ENCODE measurements at regions of chr5 and their contacts with region 1.

Region 1: DNA sequence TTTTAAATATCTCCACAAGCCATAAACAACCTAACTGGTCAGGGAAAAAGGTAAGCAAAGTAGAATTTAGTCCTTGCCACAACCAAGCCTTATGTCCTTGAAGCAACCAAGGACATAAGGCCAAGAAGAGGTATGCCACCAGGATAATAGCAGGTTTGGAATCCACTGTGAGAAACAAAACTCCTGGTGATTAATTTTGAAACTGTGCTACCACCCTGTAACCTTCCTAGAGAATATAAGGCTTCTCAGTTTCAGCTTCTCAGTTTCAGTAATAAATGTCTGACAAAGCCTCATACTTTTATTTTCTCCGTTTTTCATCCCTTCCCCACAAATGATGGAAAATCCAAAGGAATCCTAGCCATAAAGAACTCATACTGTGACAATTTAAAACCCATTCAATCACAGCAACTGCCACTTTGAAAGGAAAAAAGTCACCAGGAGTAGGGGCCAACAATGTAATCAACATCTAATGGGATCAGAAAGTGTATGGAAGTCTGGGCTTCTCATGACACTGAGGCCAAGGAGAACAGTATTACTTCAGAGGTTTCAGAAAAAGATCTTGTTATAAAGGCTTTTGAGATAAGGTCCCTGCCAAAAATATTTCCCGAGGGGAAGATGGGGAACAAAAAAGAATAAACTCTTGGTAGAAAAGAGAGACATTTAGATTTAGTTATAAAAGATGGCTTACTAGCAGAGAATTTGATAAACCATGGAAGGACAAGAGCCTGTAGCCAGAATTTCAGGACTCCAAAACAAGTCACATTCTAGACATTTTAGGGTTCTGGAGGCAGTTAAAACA is 189.2 kb downstream of the TSSK1B start:
- DNase-seq: no peak
- H3K4me3 Mint-ChIP-seq: no peak overlapping the region
- H3K27ac Mint-ChIP-seq: no peak overlapping the region
- H3K4me1 Mint-ChIP-seq: peaks cover 17% of the 10 kb centered on the region
- H3K27me3 Mint-ChIP-seq: no peaks in the 10 kb centered on the region
- CTCF ChIP-seq: no peak

Region 2: GRCh38 chr5:113119246-113119924 is 126.2 kb before region 1 on chr5:
- CTCF ChIA-PET with region 1: no interaction called
- POLR2A ChIA-PET with region 1: no interaction called
- intact Hi-C with region 1: no loop called
- DNase-seq: no peak
- H3K4me3 Mint-ChIP-seq: no peak overlapping the region
- H3K27ac Mint-ChIP-seq: no peak overlapping the region
- H3K4me1 Mint-ChIP-seq: peaks cover 5% of the 10 kb centered on the region
- H3K27me3 Mint-ChIP-seq: no peaks in the 10 kb centered on the region
- CTCF ChIP-seq: no peak

Region 3: DNA sequence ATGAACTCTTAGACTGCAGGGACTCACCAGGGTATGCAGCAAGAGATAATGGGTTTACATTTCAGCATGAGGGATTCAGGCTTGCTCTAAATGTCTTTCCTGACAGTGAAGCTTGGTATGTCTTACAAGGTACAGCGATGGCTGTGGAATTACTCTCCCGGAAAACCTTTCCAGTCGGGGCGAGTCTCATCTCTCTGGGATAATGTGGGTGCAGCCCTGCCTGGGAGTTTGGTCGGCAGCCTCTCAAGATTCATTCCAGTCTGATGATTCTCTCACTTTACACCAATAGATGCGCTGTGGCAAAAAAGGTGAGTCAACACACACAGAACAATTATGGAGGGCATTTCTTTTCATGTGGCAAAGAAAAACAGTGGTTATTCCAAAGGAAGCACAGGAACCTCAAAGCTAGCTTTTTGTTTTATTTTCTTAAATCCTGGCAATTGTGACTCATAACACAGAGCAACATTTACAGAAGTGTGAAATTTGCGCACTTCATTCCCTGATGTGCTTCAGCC is 78.7 kb before region 1 on chr5:
- CTCF ChIA-PET with region 1: no interaction called
- POLR2A ChIA-PET with region 1: interaction called, 14 read pairs
- intact Hi-C with region 1: no loop called
- DNase-seq: peak; percentile 94
- H3K4me3 Mint-ChIP-seq: peak overlapping the region; percentile 60
- H3K27ac Mint-ChIP-seq: peak overlapping the region; percentile 87
- H3K4me1 Mint-ChIP-seq: peaks cover 66% of the 10 kb centered on the region
- H3K27me3 Mint-ChIP-seq: no peaks in the 10 kb centered on the region
- CTCF ChIP-seq: no peak

Region 4: DNA sequence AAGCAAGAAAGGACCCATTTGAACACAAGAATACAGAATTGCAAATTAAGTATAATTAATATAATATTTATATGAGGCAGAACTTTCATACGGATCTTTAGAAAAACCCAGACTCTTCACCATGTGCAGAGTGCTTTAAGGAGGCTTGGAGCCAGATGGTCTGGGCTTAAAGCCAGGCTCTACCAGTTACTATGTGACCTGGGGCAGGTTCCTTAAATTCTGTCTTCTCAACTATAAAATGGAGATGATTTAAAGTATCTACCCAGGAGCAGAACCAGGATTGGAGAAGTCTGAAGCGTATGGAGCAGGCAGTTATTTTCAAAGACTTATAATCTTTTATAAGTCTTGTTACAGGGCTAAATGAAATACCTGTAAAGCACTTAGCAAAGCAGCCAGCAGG is 13.0 kb before region 1 on chr5:
- CTCF ChIA-PET with region 1: interaction called, 7 read pairs
- POLR2A ChIA-PET with region 1: interaction called, 41 read pairs
- intact Hi-C with region 1: no loop called
- DNase-seq: peak; percentile 60
- H3K4me3 Mint-ChIP-seq: no peak overlapping the region
- H3K27ac Mint-ChIP-seq: no peak overlapping the region
- H3K4me1 Mint-ChIP-seq: peaks cover 43% of the 10 kb centered on the region
- H3K27me3 Mint-ChIP-seq: no peaks in the 10 kb centered on the region
- CTCF ChIP-seq: no peak

Region 5: GRCh38 chr5:113264042-113264441 is 18.4 kb after region 1 on chr5:
- CTCF ChIA-PET with region 1: interaction called, 3 read pairs
- POLR2A ChIA-PET with region 1: interaction called, 13 read pairs
- intact Hi-C with region 1: no loop called
- DNase-seq: peak; percentile 86
- H3K4me3 Mint-ChIP-seq: no peak overlapping the region
- H3K27ac Mint-ChIP-seq: peak overlapping the region; percentile 63
- H3K4me1 Mint-ChIP-seq: peaks cover 42% of the 10 kb centered on the region
- H3K27me3 Mint-ChIP-seq: no peaks in the 10 kb centered on the region
- CTCF ChIP-seq: no peak

Measured in MCF 10A (cell line).